Stomach (tissue), 19 donors: ENCODE measurements at regions of chr11 and their contacts with region 1.

Region 1: GRCh38 chr11:662689-663274 is 25.7 kb downstream of the DRD4 start:
- DNase-seq: peak; percentile 74 to 77
- H3K4me3 ChIP-seq: no peak overlapping the region
- H3K27ac ChIP-seq: no peak overlapping the region
- H3K4me1 ChIP-seq: peaks cover 0 to 11% (median 0%) of the 10 kb centered on the region in 4 donors
- H3K27me3 ChIP-seq: no peaks in the 10 kb centered on the region
- CTCF ChIP-seq: peak in 5 of 7 experiments; percentile 55 to 89 (median 74)
- EP300 ChIP-seq: no peak
- POLR2A ChIP-seq: no peak

Region 2: DNA sequence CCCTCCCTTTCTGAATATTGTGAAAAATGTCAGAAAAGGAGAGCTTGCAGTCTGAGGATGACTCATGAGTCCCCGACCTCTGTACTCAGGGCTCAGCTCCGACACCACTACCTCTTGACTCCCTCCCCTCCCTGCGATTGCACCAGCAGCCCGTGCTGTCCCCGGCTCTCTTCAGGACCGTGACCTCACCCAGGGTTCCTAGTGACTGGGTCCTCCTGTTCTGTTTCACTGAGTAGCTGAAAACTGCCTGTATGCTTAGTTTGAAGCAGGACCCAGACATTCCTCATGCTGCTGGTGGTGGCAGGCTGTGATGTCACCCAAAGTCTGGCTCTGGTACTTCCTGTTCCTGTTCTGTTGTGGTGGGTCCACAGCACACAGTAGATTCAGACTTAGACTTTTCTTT is 74.8 kb before region 1 on chr11:
- intact Hi-C with region 1: no loop called
- DNase-seq: peak in 1 of 2 donors; percentile 59
- H3K4me3 ChIP-seq: no peak overlapping the region
- H3K27ac ChIP-seq: peak overlapping the region in 3 of 5 donors; percentile 54 to 60 (median 54)
- H3K4me1 ChIP-seq: peaks cover 0 to 32% (median 6%) of the 10 kb centered on the region in 4 donors
- H3K27me3 ChIP-seq: no peaks in the 10 kb centered on the region
- CTCF ChIP-seq: no peak
- EP300 ChIP-seq: no peak
- POLR2A ChIP-seq: no peak

Region 3: GRCh38 chr11:709109-709997 is 46.6 kb after region 1 on chr11:
- intact Hi-C with region 1: no loop called
- DNase-seq: peak in 1 of 2 donors; percentile 39
- H3K4me3 ChIP-seq: no peak overlapping the region
- H3K27ac ChIP-seq: peak overlapping the region; percentile 30 to 94 (median 55)
- H3K4me1 ChIP-seq: peaks cover 49 to 85% (median 83%) of the 10 kb centered on the region in 4 donors
- H3K27me3 ChIP-seq: peaks cover 0 to 61% (median 11%) of the 10 kb centered on the region in 3 donors
- CTCF ChIP-seq: no peak
- EP300 ChIP-seq: no peak
- POLR2A ChIP-seq: no peak

Region 4: GRCh38 chr11:727859-728748 is 65.3 kb after region 1 on chr11:
- intact Hi-C with region 1: loop called (anchors 10 kb)
- DNase-seq: peak; percentile 91 to 92
- H3K4me3 ChIP-seq: peak overlapping the region in 1 of 4 donors; percentile 12
- H3K27ac ChIP-seq: peak overlapping the region; percentile 12 to 80 (median 70)
- H3K4me1 ChIP-seq: peaks cover 33 to 59% (median 39%) of the 10 kb centered on the region in 4 donors
- H3K27me3 ChIP-seq: peaks cover 0 to 76% (median 21%) of the 10 kb centered on the region in 3 donors
- CTCF ChIP-seq: peak in 6 of 7 experiments; percentile 88 to 99 (median 98)
- EP300 ChIP-seq: no peak
- POLR2A ChIP-seq: no peak